Aorta (tissue), 5 donors: ENCODE measurements at regions of chr3 and their contacts with region 1.

Region 1: DNA sequence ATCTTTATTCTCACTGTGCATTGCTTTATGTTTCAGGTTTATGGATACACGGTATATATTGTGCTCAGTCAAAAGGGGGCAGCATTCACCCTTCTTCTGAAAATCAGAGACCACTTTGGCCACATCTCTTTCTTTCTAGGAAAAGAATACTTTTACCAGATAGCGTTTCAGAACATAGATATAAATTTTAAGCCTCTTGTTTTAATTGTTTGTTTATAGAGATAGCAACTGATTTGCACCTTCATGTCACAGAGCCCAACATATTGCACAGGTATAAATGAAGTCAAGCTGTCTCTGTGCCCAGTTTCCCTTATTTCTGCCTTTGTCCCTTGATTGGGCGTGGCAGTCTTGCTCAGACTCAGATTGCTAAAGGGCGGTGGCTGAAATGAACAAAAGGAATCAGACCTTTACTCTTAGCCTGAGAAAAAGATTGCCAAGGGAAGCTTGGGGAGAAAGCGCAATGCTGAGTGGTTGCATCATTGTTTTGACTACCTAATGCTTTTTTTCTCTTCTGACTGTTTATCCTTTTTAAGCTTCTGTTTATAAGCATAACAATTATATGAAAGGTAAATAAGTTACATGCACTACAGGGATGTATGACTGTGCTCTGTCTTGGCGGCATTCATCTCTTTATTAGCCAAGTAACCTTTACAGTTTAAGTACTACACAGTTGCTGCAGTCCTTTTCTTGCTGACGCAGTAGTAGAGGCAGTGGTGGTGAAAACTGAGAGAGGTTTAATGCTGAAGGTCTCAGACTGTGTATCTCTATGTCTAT is 70.8 kb upstream of the ZBTB20 start:
- DNase-seq: no peak
- ATAC-seq: peak; percentile 86
- H3K4me3 ChIP-seq: peak overlapping the region in 1 of 2 donors; percentile 26
- H3K27ac ChIP-seq: no peak overlapping the region
- H3K4me1 ChIP-seq: no peaks in the 10 kb centered on the region
- H3K27me3 ChIP-seq: no peaks in the 10 kb centered on the region

Region 2: GRCh38 chr3:115692887-115693524 is 475.1 kb after region 1 on chr3:
- intact Hi-C with region 1: loop called (anchors 1 to 2 kb)
- DNase-seq: peak; percentile 77 to 78
- ATAC-seq: peak; percentile 91
- H3K4me3 ChIP-seq: no peak overlapping the region
- H3K27ac ChIP-seq: no peak overlapping the region
- H3K4me1 ChIP-seq: no peaks in the 10 kb centered on the region
- H3K27me3 ChIP-seq: no peaks in the 10 kb centered on the region

Region 3: DNA sequence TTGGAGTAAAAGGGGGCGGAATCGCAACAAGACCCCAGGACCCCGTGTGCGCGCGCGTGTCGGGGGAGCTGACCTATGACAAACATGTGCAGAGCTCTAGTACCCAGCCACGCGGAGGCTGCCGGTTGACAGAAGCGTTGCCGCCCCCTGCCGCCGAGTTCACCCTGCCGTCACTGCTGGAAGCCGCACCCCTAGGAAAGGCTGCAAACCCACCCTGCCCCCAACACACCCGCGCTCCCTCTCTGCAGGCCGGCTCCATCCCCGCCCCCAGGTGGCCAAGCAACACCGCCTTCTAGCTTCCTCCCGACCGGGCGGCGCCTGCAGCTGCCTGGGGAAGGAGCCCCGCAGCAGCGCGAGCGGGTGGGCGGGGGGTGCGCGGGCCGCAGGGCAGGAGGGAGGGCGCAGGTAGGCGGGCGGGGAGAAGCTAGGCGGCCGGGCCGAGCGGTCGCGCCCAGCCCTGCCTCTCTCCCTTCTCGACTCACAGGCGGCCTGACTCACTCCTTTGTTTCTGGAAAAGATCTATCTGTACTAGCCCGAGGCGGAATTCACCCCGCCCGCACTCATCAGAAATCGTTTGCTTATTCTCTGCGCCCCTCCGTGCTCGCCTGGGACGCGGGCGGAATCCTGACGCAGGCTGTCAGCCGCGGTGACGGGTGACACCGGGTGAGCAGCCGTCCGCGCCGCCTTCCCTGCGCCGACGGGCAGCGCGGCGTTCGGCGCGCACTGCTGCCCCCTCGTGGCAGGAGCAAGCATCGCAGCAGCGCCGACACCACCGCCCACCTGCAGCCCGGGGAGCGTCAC is 566.3 kb after region 1 on chr3:
- intact Hi-C with region 1: loop called (anchors 5 to 10 kb)
- DNase-seq: peak; percentile 94 to 95
- ATAC-seq: peak; percentile 97
- H3K4me3 ChIP-seq: peak overlapping the region; percentile 58 to 85
- H3K27ac ChIP-seq: peak overlapping the region; percentile 49 to 68
- H3K4me1 ChIP-seq: no peaks in the 10 kb centered on the region
- H3K27me3 ChIP-seq: no peaks in the 10 kb centered on the region

Region 4: GRCh38 chr3:115814778-115815380 is 597.0 kb after region 1 on chr3:
- intact Hi-C with region 1: loop called (anchors 5 kb)
- DNase-seq: peak; percentile 71 to 89
- ATAC-seq: peak; percentile 83
- H3K4me3 ChIP-seq: no peak overlapping the region
- H3K27ac ChIP-seq: no peak overlapping the region
- H3K4me1 ChIP-seq: no peaks in the 10 kb centered on the region
- H3K27me3 ChIP-seq: no peaks in the 10 kb centered on the region

Region 5: GRCh38 chr3:115819785-115820384 is 602.0 kb after region 1 on chr3:
- intact Hi-C with region 1: loop called in 1 of 2 experiments (anchors 5 kb)
- DNase-seq: peak in 1 of 2 donors; percentile 60
- ATAC-seq: peak; percentile 78
- H3K4me3 ChIP-seq: no peak overlapping the region
- H3K27ac ChIP-seq: no peak overlapping the region
- H3K4me1 ChIP-seq: no peaks in the 10 kb centered on the region
- H3K27me3 ChIP-seq: no peaks in the 10 kb centered on the region